ENCODE measurements at regions of chr7 and their contacts with region 1.

Region 1: GRCh38 chr7:33128990-33129805 is at the start of gene BBS9:
- DNase-seq: peak; percentile 96
- ATAC-seq: peak; percentile 99
- H3K4me3 Mint-ChIP-seq: peak within 1 kb of the TSS; percentile 95
- H3K27ac Mint-ChIP-seq: peak within 1 kb of the TSS; percentile 89
- H3K4me1 Mint-ChIP-seq: peaks cover 16% of the 10 kb centered on the region
- H3K27me3 Mint-ChIP-seq: no peaks in the 10 kb centered on the region
- total RNA-seq, gene BBS9: 4.1 to 9.9 TPM

Region 2: GRCh38 chr7:32905175-32905662 is 224.0 kb before region 1 on chr7:
- CTCF ChIA-PET with region 1: no interaction called
- POLR2A ChIA-PET with region 1: no interaction called
- intact Hi-C with region 1: loop called in 1 of 2 experiments (anchors 1 kb)
- DNase-seq: peak; percentile 84
- ATAC-seq: peak; percentile 93
- H3K4me3 Mint-ChIP-seq: peak overlapping the region; percentile 69
- H3K27ac Mint-ChIP-seq: peak overlapping the region; percentile 86
- H3K4me1 Mint-ChIP-seq: peaks cover 15% of the 10 kb centered on the region
- H3K27me3 Mint-ChIP-seq: no peaks in the 10 kb centered on the region

Region 3: GRCh38 chr7:33040803-33041516 is 88.2 kb before region 1 on chr7:
- CTCF ChIA-PET with region 1: no interaction called
- POLR2A ChIA-PET with region 1: no interaction called
- intact Hi-C with region 1: loop called in 1 of 2 experiments (anchors 1 kb)
- DNase-seq: peak; percentile 79
- ATAC-seq: peak; percentile 99
- H3K4me3 Mint-ChIP-seq: peak overlapping the region; percentile 66
- H3K27ac Mint-ChIP-seq: peak overlapping the region; percentile 77
- H3K4me1 Mint-ChIP-seq: peaks cover 62% of the 10 kb centered on the region
- H3K27me3 Mint-ChIP-seq: no peaks in the 10 kb centered on the region

Region 4: DNA sequence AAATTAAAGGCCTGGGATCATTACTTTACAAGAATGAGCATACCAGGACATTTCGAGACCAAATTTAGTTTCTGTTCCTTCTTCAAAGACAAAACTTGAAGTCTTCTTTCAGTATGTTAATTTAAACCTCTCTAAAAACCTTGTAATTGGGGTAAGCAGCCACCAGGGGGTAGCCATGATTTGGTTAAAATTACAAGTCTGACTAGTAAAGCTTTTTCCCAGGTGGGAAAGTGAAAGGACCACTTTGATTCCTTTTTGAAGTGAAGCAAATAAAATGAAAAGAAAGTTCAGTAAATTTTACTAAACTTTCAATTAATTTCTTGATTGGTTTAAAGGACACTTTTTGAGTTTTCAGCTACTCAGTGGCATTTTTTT is 294.4 kb after region 1 on chr7:
- CTCF ChIA-PET with region 1: no interaction called
- POLR2A ChIA-PET with region 1: no interaction called
- intact Hi-C with region 1: no loop called
- DNase-seq: peak; percentile 29
- ATAC-seq: no peak
- H3K4me3 Mint-ChIP-seq: no peak overlapping the region
- H3K27ac Mint-ChIP-seq: no peak overlapping the region
- H3K4me1 Mint-ChIP-seq: no peaks in the 10 kb centered on the region
- H3K27me3 Mint-ChIP-seq: no peaks in the 10 kb centered on the region

Region 5: DNA sequence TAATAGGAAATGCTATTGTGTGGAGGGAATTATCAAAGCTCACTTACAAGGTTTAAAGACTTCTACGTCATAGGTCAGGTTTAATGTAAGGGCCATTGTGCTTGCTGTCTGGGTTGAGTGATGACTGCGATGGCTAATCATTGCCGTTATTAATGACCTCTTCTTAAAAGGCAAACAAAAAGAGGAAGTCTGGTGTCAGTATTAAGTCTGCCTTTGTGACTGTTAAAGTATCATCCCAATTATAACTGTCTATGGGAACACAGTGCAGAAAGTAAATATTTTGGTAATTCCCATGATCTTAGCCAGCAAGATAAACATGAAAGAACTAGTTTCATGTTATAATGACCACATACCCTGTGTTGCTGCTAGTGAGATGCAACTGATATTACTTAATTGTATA is 382.6 kb after region 1 on chr7:
- CTCF ChIA-PET with region 1: no interaction called
- POLR2A ChIA-PET with region 1: no interaction called
- intact Hi-C with region 1: no loop called
- DNase-seq: no peak
- ATAC-seq: no peak
- H3K4me3 Mint-ChIP-seq: no peak overlapping the region
- H3K27ac Mint-ChIP-seq: no peak overlapping the region
- H3K4me1 Mint-ChIP-seq: no peaks in the 10 kb centered on the region
- H3K27me3 Mint-ChIP-seq: no peaks in the 10 kb centered on the region

Measured in activated CD4-positive, alpha-beta T cell treated with anti-CD3 and anti-CD28 coated beads for 36 hours (primary cell).